ENCODE measurements at regions of chr1 and their contacts with region 1.

Region 1: DNA sequence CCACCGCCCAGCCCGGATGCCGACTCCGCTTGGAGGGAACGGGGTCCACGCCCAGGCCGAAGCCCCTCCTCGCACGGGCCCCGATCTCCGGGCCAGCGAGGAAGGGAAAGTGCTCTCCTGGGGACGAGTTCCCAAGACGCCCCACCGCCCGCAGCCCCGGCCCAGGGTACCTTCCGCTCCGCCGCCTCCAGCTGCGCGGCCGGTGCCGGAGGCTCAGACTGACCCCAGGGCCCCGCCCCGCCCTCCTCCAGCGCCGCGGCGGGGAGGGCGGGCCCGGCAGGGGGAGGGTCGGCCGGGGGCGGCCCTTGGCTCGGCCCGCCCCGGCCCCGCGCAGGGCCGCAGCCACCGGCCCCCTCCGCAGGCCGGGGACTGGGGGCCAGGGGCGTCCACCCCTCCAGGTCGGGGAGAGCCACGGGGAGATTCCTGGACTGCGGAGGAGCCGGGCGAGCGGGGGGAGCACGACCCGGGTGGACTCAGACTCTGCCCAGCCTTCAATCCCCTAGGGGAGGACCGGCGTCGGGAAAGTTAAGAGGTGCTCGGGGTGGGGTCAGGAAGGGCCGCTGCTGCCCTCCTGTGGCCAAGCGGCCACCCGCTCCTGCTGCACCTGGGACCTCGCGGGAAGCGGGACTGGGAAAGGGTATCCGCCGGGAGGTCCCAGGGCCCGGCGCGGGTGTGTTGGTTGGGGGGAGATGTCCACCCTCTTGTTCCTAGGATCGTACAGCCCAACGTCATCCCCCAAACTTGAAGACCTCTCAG is at the start of gene RHOC:
- DNase-seq: peak; percentile 82 to 86
- ATAC-seq: peak; percentile 75 to 77
- H3K4me3 ChIP-seq: peak within 1 kb of the TSS; percentile 99
- H3K27ac ChIP-seq: peak within 1 kb of the TSS; percentile 98 to 100
- H3K4me1 ChIP-seq: peaks cover 34% of the 10 kb centered on the region
- CTCF ChIP-seq: peak; percentile 79
- EP300 ChIP-seq: no peak
- POLR2A ChIP-seq: peak; percentile 62
- RAD21 ChIP-seq: peak; percentile 71 to 86
- polyA plus RNA-seq, gene RHOC: 255 and 321 TPM in 2 replicates

Region 2: DNA sequence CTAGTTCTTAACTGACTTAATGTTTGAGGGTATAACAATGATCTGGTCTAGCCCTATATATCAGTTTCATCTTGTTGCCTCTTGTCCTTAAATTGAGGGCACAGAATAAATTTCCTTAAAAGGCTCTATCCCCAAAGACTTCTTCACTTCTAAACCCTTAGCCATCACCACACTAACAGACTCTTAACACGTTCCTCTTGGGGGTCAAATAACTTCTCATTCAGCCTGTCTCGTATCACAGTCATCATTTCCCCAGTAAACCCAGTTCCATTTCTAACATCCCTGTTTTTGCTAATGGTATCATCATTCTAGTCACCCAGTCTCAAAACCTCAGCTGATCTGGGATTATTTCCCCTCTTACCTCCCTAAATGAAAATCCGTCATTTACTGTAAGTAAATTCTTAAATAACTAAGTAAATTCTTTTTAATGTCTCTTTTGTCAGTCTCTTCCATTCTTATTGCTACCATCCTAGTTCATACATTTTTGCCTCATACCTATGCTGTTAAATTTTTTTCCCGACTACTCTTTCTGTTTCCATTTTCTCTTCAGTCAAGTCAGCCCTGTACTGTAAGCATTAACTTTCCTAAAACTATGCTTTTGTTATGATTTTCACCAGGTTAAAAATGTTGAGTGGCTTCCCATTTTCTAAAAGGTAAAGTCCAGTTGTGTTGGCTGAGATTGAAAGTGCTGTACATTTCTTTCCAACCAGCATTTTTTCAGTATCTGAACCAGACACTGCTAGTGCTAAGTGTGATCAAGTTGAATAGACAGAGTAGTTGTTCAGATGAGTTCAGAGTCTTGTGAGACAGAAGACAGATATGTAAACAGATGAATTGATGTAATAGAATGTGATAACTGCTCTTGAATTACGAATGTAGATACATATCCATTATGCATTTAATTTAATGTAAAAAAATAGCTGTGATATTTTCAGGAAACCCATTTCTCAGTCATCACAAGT is 304.1 kb before region 1 on chr1:
- CTCF ChIA-PET with region 1: interaction called, 3 read pairs
- POLR2A ChIA-PET with region 1: interaction called, 10 read pairs
- DNase-seq: no peak
- ATAC-seq: no peak
- H3K4me3 ChIP-seq: no peak overlapping the region
- H3K27ac ChIP-seq: no peak overlapping the region
- H3K4me1 ChIP-seq: peaks cover 27% of the 10 kb centered on the region; the same call in 2 of the 3 replicates
- CTCF ChIP-seq: no peak
- EP300 ChIP-seq: no peak
- POLR2A ChIP-seq: no peak
- RAD21 ChIP-seq: no peak

Region 3: DNA sequence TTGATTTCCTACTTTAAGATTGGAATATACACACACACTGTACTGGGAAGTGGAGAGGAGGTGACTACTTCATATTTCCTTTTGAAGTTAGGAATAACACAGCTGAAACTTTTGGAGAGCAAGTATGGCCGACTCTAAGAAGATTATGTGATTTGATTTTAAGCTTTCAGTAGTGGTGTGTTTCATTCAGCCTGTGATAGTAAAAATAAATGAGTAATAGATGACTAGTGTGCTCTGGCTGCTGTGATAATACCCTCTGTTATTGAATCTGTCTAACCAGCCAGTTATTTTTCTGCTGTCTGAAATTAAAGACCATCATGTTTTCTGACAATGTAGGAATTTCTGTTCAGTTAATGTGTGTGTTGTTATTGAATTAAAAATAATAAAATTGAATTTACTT is 262.8 kb before region 1 on chr1:
- CTCF ChIA-PET with region 1: no interaction called
- POLR2A ChIA-PET with region 1: no interaction called
- DNase-seq: no peak
- ATAC-seq: no peak
- H3K4me3 ChIP-seq: no peak overlapping the region
- H3K27ac ChIP-seq: no peak overlapping the region
- H3K4me1 ChIP-seq: peaks cover 5% of the 10 kb centered on the region; the same call in 1 of the 3 replicates
- CTCF ChIP-seq: no peak
- EP300 ChIP-seq: no peak
- POLR2A ChIP-seq: no peak
- RAD21 ChIP-seq: no peak

Region 4: GRCh38 chr1:112522621-112523020 is 184.5 kb before region 1 on chr1:
- CTCF ChIA-PET with region 1: no interaction called
- POLR2A ChIA-PET with region 1: no interaction called
- DNase-seq: no peak
- ATAC-seq: no peak
- H3K4me3 ChIP-seq: no peak overlapping the region
- H3K27ac ChIP-seq: no peak overlapping the region
- H3K4me1 ChIP-seq: no peaks in the 10 kb centered on the region
- CTCF ChIP-seq: no peak
- EP300 ChIP-seq: no peak
- POLR2A ChIP-seq: no peak
- RAD21 ChIP-seq: no peak

Region 5: DNA sequence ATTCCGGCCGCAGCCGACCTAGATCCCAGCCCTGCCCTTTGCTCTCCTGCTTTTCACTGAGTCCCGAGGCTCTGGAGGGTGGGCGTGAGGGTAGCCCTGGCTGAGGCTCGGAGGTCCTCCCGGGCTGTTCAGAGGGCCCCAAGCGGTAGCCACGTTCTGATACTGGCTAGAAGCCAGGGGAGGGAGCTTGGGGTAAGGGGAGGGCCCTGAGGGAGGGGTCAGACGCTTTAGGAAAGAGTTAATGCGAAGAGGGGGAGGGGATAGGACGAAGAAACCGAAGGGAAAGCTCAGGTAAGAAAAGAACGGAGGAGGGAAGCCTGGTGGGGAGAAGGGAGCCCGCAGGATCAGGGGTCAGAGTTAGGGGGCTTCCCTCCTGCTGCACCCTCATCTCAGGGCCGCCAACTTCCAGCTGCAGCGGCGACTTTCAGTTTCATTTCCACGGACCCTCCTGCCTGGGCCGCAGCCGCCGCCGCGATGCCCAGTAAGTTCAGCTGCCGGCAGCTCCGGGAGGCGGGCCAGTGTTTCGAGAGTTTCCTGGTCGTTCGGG is 32.6 kb before region 1 on chr1 and contains the start of gene MOV10:
- CTCF ChIA-PET with region 1: interaction called, 10 read pairs
- POLR2A ChIA-PET with region 1: interaction called, 9 read pairs
- DNase-seq: peak; percentile 35 to 69
- ATAC-seq: peak; percentile 74 to 85
- H3K4me3 ChIP-seq: peak within 1 kb of the TSS; percentile 92
- H3K27ac ChIP-seq: peak within 1 kb of the TSS; percentile 94 to 97
- H3K4me1 ChIP-seq: peaks cover 11% of the 10 kb centered on the region; the same call in 2 of the 3 replicates
- CTCF ChIP-seq: no peak
- EP300 ChIP-seq: no peak
- POLR2A ChIP-seq: 0 out of 2 replicates have a peak, but pooled peaks have one; percentile 23
- RAD21 ChIP-seq: no peak
- polyA plus RNA-seq, gene MOV10: 27.3 and 28.3 TPM in 2 replicates

Region 6: DNA sequence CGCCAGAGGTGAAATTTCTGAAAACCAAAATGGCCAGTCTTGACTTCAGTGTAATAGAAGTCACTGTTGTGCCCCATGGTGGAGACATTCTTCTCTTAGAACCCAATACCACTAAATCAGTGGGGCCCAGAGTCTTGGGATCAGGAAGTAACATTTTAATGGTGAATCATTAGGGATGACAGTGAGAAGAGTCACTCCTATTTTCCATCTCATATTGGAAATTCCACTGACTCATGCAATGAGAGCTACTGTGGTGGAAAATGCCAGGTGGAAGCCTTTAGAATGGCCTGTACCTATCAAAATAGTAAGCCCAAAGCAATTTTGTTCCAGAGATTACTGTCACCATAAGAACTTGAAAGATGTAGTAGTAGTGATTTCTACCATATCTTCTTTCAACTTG is 28.7 kb after region 1 on chr1:
- CTCF ChIA-PET with region 1: no interaction called
- POLR2A ChIA-PET with region 1: no interaction called
- DNase-seq: peak; percentile 23 to 28
- ATAC-seq: peak; percentile 62 to 67; a peak in 4 of 6 replicates
- H3K4me3 ChIP-seq: no peak overlapping the region
- H3K27ac ChIP-seq: no peak overlapping the region
- H3K4me1 ChIP-seq: no peaks in the 10 kb centered on the region
- CTCF ChIP-seq: no peak
- EP300 ChIP-seq: no peak
- POLR2A ChIP-seq: no peak
- RAD21 ChIP-seq: no peak

Measured in A549 (cell line).